Cardiac septum (tissue), 1 donor: ENCODE measurements at regions of chr5 and their contacts with region 1.

Region 1: DNA sequence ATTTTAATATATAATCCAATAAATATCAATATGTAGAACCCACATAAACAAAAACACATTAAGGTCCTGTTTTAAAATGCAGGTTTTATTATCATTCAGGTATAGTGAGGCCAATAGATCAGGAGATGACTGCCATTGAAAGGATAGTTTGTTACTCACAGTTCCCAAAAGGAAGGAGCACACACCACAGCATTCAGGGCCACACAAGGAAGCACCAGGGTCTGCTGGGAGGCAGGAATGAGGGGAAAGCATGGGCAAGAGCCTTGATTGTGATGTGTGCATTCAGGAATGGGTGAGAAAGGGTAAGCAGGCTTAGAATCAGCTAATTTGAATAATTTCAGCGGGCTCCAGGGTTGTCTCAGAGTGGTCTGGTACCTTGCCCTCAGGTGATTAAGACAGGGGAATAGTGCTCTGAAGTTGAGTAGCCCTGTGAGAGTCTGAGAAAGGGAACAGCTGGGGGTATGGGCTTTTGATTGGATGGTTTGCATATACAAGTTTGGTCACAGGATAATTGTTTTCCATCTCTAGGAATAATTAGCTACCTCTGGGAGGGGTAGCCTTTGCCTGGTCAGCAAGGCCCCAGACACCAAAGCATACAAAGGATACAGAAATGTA is 19.8 kb upstream of the OTULIN start:
- DNase-seq: no peak

Region 2: DNA sequence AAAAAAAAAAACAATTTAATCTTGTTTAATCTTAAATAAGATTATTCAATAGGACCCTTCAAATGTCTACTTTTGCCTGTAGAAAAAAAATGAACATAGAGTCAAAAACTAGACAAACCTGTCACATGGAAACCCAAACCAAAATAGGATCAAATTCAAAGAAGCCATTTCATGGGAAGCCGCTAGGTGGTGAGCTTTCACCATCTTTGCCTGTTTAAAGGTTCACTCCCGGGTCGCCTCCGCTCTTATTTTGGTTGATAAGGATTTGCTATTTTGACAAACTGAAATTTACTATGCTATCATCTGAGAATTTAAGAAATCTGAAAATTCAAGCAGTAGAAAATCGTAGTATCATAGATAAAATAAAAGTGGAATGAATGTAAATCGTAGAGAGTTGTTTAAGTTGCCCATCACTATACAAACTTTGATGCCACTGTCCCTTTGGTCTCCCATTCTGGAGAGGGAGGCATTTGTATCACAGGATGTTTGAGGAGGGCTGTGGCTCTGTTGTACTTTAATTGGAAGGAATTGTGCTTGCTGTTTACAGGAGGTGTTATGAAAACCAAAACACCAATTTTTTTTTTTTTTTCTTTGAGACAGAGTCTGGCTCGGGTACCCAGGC is 656.8 kb before region 1 on chr5:
- intact Hi-C with region 1: loop called (anchors 5 kb)
- DNase-seq: no peak

Region 3: DNA sequence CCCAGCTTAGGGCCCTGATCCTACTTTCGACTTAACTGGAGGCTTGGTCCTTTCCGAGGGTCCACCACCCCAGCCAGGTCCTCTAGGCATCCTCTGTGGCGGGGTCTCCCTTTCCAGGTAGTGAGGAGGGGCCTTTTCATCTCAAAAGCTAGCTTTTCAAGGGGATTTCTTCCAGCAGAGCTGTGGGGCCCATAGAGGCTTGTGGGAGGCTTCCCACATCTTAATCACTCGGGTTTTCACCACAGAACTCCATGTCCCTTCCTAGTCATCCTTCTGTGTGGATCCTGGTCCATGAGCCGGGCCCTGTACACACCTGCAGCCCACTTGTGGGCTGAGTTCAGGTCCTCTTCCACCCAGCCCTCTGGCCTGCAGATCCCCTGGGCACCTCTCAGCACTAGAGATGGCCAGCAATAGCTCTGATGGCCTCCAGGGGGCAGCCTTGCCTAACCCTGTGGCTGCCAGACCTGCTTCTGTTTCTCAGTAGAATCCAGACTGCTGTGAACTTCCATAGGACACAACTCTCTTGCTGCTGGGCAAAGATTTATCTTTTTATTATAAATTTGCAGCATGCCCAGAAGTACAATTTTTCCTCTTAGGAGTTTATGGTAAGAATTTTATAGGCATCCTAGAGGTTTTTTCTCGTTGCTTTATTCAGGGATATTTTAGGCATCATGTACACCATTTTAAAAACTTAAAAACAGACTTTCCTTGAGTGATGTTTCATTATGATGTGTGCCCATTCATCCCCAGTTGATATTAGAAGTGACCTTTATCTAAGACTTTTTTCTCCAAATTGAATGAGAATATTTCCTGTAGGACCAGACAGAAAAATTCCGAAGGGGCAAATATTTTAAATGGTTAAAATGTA is 292.7 kb before region 1 on chr5:
- intact Hi-C with region 1: loop called (anchors 5 kb)
- DNase-seq: peak; percentile 86

Region 4: DNA sequence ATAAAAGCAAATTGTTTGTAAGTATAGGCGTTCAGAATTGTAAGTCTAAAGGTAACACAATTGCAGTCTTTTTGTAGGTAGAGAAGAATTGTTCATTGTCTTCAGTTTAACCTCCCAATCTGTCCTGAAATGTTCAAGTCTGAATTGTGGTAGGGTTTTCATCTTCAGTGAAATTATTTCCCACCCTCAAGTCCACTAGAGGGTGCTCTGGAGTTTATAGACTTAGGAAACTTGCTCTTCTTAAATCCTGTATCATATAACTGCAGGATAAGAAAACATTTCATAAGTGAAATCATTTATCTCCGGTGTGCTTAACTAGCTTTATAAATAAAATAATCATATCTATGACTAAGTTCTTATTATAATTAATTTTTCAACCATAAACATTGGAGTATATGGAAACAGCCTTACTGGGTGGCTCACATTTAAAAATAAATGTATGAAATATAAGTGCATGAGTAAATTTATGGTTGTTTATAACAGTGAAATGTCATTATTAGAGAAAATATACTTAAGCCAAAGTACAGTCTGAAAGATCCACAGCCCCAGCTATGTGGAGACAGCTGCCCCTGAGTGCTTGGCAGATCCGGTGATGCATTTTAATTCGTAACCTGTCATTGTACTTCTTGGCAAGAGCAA is 245.6 kb before region 1 on chr5:
- intact Hi-C with region 1: loop called (anchors 2 kb)
- DNase-seq: no peak

Region 5: GRCh38 chr5:14491015-14491915 is 153.5 kb before region 1 on chr5:
- intact Hi-C with region 1: loop called (anchors 10 kb)
- DNase-seq: no peak